B cell (primary cell): ENCODE measurements at regions of chr20 and their contacts with region 1.

Region 1: GRCh38 chr20:62623488-62624324 is 18.6 kb upstream of the SLCO4A1 start:
- DNase-seq: peak; percentile 92
- ATAC-seq: peak; percentile 87
- H3K4me3 ChIP-seq: peak overlapping the region in 4 of 5 experiments; percentile 26 to 56 (median 49)
- H3K4me3 Mint-ChIP-seq: peak overlapping the region; percentile 85
- H3K27ac ChIP-seq: peak overlapping the region; percentile 77 to 94
- H3K27ac Mint-ChIP-seq: peak overlapping the region; percentile 98
- H3K4me1 ChIP-seq: peaks cover 45 to 50% of the 10 kb centered on the region in 2 donors
- H3K4me1 Mint-ChIP-seq: peaks cover 39% of the 10 kb centered on the region
- H3K27me3 ChIP-seq: no peaks in the 10 kb centered on the region
- H3K27me3 Mint-ChIP-seq: no peaks in the 10 kb centered on the region
- CTCF ChIP-seq: no peak

Region 2: GRCh38 chr20:62219992-62220665 is 403.6 kb before region 1 on chr20 and contains the start of gene HRH3:
- CTCF ChIA-PET with region 1: no interaction called
- POLR2A ChIA-PET with region 1: no interaction called
- intact Hi-C with region 1: no loop called
- DNase-seq: peak; percentile 61
- ATAC-seq: peak; percentile 87
- H3K4me3 ChIP-seq: no peak within 1 kb of the TSS
- H3K4me3 Mint-ChIP-seq: peak within 1 kb of the TSS; percentile 49
- H3K27ac ChIP-seq: no peak within 1 kb of the TSS
- H3K27ac Mint-ChIP-seq: no peak within 1 kb of the TSS
- H3K4me1 ChIP-seq: peaks cover 12 to 17% of the 10 kb centered on the region in 2 donors
- H3K4me1 Mint-ChIP-seq: peaks cover 2% of the 10 kb centered on the region
- H3K27me3 ChIP-seq: peaks cover 0 to 81% (median 33%) of the 10 kb centered on the region in 4 experiments
- H3K27me3 Mint-ChIP-seq: peaks cover 33% of the 10 kb centered on the region
- CTCF ChIP-seq: no peak
- total RNA-seq, gene HRH3: not detected in 2 replicates

Region 3: DNA sequence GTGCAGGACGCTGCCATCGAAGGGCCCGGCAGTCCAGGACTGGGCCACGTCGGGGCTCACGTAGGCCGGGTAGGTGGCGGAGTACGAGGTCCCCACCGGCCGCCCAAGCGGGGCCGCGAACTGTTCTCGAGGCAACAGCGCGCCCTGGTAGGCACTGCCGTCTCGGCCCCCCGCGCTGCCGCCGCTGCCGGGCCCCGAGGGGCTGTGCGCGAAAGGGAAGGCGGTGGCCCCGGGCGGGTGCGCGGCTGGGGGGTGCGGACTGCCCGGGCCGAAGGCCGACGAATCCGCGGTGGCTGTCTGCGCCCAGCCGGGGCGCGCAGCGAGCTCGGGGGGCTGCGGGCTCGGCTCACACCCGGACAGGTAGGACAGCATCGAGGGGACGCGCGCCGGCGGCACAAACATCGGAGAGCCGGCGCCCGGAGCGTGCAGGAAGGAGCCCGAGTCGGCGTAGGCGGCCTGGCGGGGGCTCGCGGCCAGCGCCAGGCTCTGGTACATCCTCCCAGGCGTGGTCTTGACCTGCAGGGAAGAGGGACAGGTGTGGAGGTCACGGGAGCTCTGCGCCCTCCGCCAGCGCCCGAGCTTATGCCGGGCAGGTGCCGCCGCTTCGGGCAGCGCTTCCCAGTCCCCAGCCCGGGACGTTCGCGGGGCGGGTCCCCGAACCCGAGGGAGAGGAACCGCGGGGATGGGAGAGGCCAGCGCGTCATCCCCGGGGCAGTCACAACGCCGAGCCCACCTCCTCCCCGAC is 148.5 kb before region 1 on chr20:
- CTCF ChIA-PET with region 1: no interaction called
- POLR2A ChIA-PET with region 1: no interaction called
- intact Hi-C with region 1: no loop called
- DNase-seq: no peak
- ATAC-seq: no peak
- H3K4me3 ChIP-seq: no peak overlapping the region
- H3K4me3 Mint-ChIP-seq: no peak overlapping the region
- H3K27ac ChIP-seq: no peak overlapping the region
- H3K27ac Mint-ChIP-seq: no peak overlapping the region
- H3K4me1 ChIP-seq: peaks cover 15 to 28% of the 10 kb centered on the region in 2 donors
- H3K4me1 Mint-ChIP-seq: peaks cover 4% of the 10 kb centered on the region
- H3K27me3 ChIP-seq: peaks cover 0 to 66% (median 26%) of the 10 kb centered on the region in 4 experiments
- H3K27me3 Mint-ChIP-seq: peaks cover 33% of the 10 kb centered on the region
- CTCF ChIP-seq: no peak

Region 4: DNA sequence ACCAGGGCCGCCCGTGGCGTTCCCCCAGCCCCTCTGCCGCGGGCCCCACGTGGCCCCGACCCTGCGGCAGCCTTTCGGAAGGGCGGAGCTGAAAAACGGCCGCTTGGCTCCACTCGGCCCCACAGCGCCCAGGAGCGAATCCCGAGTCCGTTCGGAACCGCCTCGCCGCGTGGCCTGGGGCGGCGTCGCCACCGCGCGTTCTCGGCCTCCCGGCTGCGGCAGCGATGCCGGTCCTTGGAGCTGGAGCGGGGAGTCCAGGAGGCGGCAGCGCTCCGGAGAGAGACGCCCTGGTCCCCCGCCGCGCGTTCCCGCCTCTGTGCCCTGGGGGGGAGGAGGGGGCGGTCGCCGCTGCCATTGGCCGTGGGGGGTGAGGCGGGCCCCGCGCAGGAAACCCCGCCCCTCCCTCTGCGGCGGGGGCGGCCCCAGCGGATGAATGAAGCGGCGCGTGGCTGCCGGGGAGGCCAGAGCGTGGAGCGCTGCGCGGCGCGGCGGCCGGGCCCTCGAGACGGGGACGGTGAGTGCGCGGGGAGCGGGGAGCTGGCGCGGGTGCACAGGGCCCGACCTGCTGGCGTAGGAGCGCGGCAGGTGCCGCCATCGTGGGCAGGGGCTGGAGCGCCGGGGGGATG is 18.4 kb after region 1 on chr20 and contains the start of gene SLCO4A1:
- CTCF ChIA-PET with region 1: interaction called, 58 read pairs
- POLR2A ChIA-PET with region 1: interaction called, 21 read pairs
- intact Hi-C with region 1: loop called (anchors 1 kb)
- DNase-seq: peak; percentile 90
- ATAC-seq: peak; percentile 89
- H3K4me3 ChIP-seq: peak within 1 kb of the TSS; percentile 9 to 77 (median 65)
- H3K4me3 Mint-ChIP-seq: peak within 1 kb of the TSS; percentile 89
- H3K27ac ChIP-seq: no peak within 1 kb of the TSS
- H3K27ac Mint-ChIP-seq: peak within 1 kb of the TSS; percentile 88
- H3K4me1 ChIP-seq: peaks cover 43 to 53% of the 10 kb centered on the region in 2 donors
- H3K4me1 Mint-ChIP-seq: peaks cover 43% of the 10 kb centered on the region
- H3K27me3 ChIP-seq: peaks cover 0 to 3% (median 0%) of the 10 kb centered on the region in 4 experiments
- H3K27me3 Mint-ChIP-seq: no peaks in the 10 kb centered on the region
- CTCF ChIP-seq: no peak
- total RNA-seq, gene SLCO4A1: 79.2 and 79.5 TPM in 2 replicates

Region 5: DNA sequence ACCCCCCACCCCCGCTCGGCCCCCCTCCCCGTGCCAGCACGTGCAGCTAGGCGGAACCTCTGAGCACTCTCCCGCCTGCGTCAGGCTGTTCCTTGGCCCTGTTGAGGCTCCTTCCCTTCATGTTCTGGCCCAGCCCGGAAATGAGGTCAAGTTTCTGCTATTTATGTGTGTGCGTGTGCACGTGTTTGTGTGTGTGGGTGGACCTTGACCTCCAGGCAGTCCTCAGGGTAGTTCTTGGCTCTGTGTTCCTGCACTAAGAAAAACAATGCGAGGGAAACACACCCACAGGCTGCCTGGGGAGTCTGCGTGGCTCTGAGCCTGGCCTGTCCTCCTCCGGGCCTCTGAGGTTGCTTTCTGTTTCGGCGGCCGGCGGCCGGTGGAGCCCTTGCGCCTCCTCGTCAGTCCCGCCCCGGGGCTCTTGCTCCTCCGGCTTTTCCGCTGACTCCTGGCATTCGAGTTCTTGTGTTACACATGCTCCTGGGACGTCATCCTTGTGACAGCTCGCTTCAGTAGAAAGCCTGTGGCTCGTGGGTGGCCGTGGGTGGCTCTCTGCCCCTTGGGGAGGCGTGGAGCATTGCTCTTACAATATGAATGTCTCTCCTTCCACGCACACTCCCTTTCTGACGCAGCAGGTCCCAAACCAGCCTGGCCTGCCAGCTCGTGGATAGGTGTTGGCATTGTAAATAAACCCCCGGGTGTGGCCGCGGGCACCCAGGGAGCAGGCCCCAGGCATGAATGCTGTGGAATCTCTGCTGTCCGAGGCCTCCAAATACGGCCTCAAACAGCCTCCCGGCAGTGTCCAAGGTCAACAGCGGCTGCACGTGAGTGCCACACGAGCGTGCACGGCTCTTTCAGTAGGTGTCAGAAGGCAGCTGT is 28.6 kb after region 1 on chr20:
- CTCF ChIA-PET with region 1: interaction called, 36 read pairs
- POLR2A ChIA-PET with region 1: interaction called, 26 read pairs
- intact Hi-C with region 1: loop called (anchors 1 kb)
- DNase-seq: peak; percentile 86
- ATAC-seq: peak; percentile 65
- H3K4me3 ChIP-seq: peak overlapping the region in 4 of 5 experiments; percentile 18 to 57 (median 44)
- H3K4me3 Mint-ChIP-seq: peak overlapping the region; percentile 87
- H3K27ac ChIP-seq: peak overlapping the region; percentile 85 to 91
- H3K27ac Mint-ChIP-seq: peak overlapping the region; percentile 96
- H3K4me1 ChIP-seq: peaks cover 51 to 57% of the 10 kb centered on the region in 2 donors
- H3K4me1 Mint-ChIP-seq: peaks cover 59% of the 10 kb centered on the region
- H3K27me3 ChIP-seq: no peaks in the 10 kb centered on the region
- H3K27me3 Mint-ChIP-seq: no peaks in the 10 kb centered on the region
- CTCF ChIP-seq: no peak

Region 6: GRCh38 chr20:62668441-62669027 is 44.8 kb after region 1 on chr20:
- CTCF ChIA-PET with region 1: no interaction called
- POLR2A ChIA-PET with region 1: no interaction called
- intact Hi-C with region 1: loop called (anchors 1 kb)
- DNase-seq: peak; percentile 56
- ATAC-seq: no peak
- H3K4me3 ChIP-seq: no peak overlapping the region
- H3K4me3 Mint-ChIP-seq: no peak overlapping the region
- H3K27ac ChIP-seq: no peak overlapping the region
- H3K27ac Mint-ChIP-seq: no peak overlapping the region
- H3K4me1 ChIP-seq: no peaks in the 10 kb centered on the region
- H3K4me1 Mint-ChIP-seq: no peaks in the 10 kb centered on the region
- H3K27me3 ChIP-seq: no peaks in the 10 kb centered on the region
- H3K27me3 Mint-ChIP-seq: no peaks in the 10 kb centered on the region
- CTCF ChIP-seq: peak; percentile 73